RWPE1 (cell line): ENCODE measurements at regions of chr17 and their contacts with region 1.

Region 1: GRCh38 chr17:41579484-41580243 is 7.0 kb downstream of the KRT14 start:
- DNase-seq: peak; percentile 89
- H3K27ac ChIP-seq: peak overlapping the region; percentile 100
- CTCF ChIP-seq: peak; percentile 96

Region 2: GRCh38 chr17:41251261-41251660 is 328.4 kb before region 1 on chr17:
- CTCF ChIA-PET with region 1: no interaction called
- POLR2A ChIA-PET with region 1: no interaction called
- DNase-seq: no peak
- H3K27ac ChIP-seq: no peak overlapping the region
- CTCF ChIP-seq: no peak

Region 3: GRCh38 chr17:41527843-41528667 is 51.6 kb before region 1 on chr17 and contains the start of gene KRT19:
- CTCF ChIA-PET with region 1: no interaction called
- POLR2A ChIA-PET with region 1: no interaction called
- DNase-seq: no peak
- H3K27ac ChIP-seq: peak within 1 kb of the TSS; percentile 32
- CTCF ChIP-seq: no peak

Region 4: GRCh38 chr17:41567317-41567716 is 12.3 kb before region 1 on chr17:
- CTCF ChIA-PET with region 1: interaction called, 12 read pairs
- POLR2A ChIA-PET with region 1: no interaction called
- DNase-seq: no peak
- H3K27ac ChIP-seq: no peak overlapping the region
- CTCF ChIP-seq: no peak

Region 5: DNA sequence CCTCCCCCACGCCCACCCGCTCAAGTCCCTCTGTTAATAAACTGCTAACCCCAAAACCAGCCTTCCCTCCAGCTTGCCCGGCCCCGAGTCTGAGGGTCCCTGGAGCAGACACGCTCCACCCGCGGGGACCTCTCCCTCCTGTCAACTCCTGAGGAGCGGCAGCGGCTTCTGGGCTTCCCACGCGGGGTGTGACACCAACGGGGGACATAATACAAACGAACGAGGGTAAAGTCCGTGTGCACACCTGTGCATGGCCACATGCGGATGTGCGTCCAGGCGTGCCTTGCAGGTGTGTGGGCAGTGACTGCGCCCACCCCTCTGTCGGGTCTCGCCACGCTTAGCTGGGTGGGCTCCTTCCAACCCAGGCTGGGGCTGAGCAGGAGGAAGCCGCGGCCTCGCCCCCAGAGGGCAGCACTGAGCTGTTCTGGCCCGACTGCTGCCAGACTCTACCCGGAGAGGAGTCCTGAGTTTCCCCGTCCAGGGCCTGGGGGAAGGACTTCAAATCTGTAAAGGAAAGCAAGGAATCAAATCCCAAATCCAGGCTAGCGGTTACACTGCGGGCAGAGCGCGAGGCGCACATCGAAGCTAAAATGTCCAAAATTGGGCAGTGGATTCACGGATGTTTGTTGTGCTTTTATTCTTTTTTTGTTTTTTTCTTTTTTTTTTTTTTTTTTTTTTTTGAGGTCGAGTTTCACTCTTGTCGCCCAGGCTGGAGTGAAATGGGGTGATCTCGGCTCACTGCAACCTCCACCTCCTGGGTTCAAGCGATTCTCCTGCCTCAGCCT is 68.9 kb after region 1 on chr17:
- CTCF ChIA-PET with region 1: interaction called, 13 read pairs
- POLR2A ChIA-PET with region 1: interaction called, 10 read pairs
- DNase-seq: peak; percentile 76
- H3K27ac ChIP-seq: peak overlapping the region; percentile 100
- CTCF ChIP-seq: peak; percentile 85